CD4-positive, alpha-beta T cell (primary cell): ENCODE measurements at regions of chr9 and their contacts with region 1.

Region 1: GRCh38 chr9:133726401-133727276 is 11.5 kb downstream of the SARDH start:
- DNase-seq: peak; percentile 54 to 80 (median 68)
- ATAC-seq: peak; percentile 81
- H3K4me3 ChIP-seq: no peak overlapping the region
- H3K4me3 Mint-ChIP-seq: peak overlapping the region; percentile 43
- H3K27ac ChIP-seq: no peak overlapping the region
- H3K27ac Mint-ChIP-seq: peak overlapping the region; percentile 81
- H3K4me1 ChIP-seq: peaks cover 10% of the 10 kb centered on the region
- H3K4me1 Mint-ChIP-seq: peaks cover 20% of the 10 kb centered on the region
- H3K27me3 ChIP-seq: no peaks in the 10 kb centered on the region
- H3K27me3 Mint-ChIP-seq: no peaks in the 10 kb centered on the region
- CTCF ChIP-seq: peak; percentile 68

Region 2: DNA sequence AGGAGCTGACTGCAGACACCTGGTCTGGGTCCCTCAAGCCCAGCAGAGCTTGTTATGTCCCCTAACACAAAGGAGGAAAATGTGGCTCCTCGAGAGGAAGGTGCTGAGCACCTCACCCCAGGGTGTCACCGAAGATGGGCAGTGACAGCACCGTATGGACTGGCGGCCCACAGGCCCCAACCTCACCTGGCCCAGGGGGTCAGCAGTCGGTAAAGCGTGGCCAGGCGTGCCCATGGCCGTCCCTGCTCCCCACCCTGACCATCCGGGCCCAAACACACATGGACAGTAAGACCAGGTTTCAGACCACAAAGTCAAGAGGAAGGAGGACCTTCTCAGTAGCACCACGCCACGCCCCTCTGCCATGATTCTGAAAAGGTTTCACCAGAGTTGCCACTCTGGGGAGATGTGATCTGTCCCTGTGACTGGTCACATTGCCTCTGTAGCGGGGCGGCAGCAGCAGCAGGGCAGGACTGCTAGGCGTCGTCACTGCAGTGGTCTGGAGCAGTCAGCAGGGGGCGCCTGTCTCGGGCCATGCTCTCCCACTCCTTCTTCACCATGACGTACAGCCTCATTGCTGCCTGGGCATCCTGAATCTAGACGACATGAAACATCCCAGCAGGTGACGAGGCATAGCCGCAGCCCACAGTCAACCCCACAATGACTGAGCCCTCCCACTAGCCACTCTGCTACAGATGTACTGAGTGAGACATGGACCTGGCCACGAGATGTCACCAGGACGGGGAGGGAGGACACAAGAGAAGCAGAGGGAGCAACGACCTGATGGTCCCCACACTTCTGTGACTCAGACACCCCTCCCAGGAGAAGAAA is 319.9 kb before region 1 on chr9:
- CTCF ChIA-PET with region 1: no interaction called
- POLR2A ChIA-PET with region 1: no interaction called
- intact Hi-C with region 1: loop called in 1 of 2 experiments (anchors 10 kb)
- DNase-seq: peak; percentile 68 to 89 (median 74)
- ATAC-seq: peak; percentile 93
- H3K4me3 ChIP-seq: no peak overlapping the region
- H3K4me3 Mint-ChIP-seq: no peak overlapping the region
- H3K27ac ChIP-seq: no peak overlapping the region
- H3K27ac Mint-ChIP-seq: peak overlapping the region; percentile 73
- H3K4me1 ChIP-seq: peaks cover 9% of the 10 kb centered on the region
- H3K4me1 Mint-ChIP-seq: peaks cover 6% of the 10 kb centered on the region
- H3K27me3 ChIP-seq: no peaks in the 10 kb centered on the region
- H3K27me3 Mint-ChIP-seq: no peaks in the 10 kb centered on the region
- CTCF ChIP-seq: peak; percentile 91

Region 3: GRCh38 chr9:133532937-133533668 is 193.5 kb before region 1 on chr9:
- CTCF ChIA-PET with region 1: no interaction called
- POLR2A ChIA-PET with region 1: no interaction called
- intact Hi-C with region 1: loop called in 1 of 2 experiments (anchors 5 kb)
- DNase-seq: peak; percentile 47 to 83 (median 64)
- ATAC-seq: peak; percentile 82
- H3K4me3 ChIP-seq: no peak overlapping the region
- H3K4me3 Mint-ChIP-seq: peak overlapping the region; percentile 87
- H3K27ac ChIP-seq: no peak overlapping the region
- H3K27ac Mint-ChIP-seq: peak overlapping the region; percentile 85
- H3K4me1 ChIP-seq: peaks cover 26% of the 10 kb centered on the region
- H3K4me1 Mint-ChIP-seq: peaks cover 12% of the 10 kb centered on the region
- H3K27me3 ChIP-seq: peaks cover 0 to 10% of the 10 kb centered on the region in 2 experiments
- H3K27me3 Mint-ChIP-seq: peaks cover 6% of the 10 kb centered on the region
- CTCF ChIP-seq: peak; percentile 32

Region 4: GRCh38 chr9:133589454-133590227 is 137.0 kb before region 1 on chr9:
- CTCF ChIA-PET with region 1: no interaction called
- POLR2A ChIA-PET with region 1: no interaction called
- intact Hi-C with region 1: loop called in 1 of 2 experiments (anchors 1 kb)
- DNase-seq: peak; percentile 24 to 67 (median 38)
- ATAC-seq: peak; percentile 24
- H3K4me3 ChIP-seq: no peak overlapping the region
- H3K4me3 Mint-ChIP-seq: no peak overlapping the region
- H3K27ac ChIP-seq: no peak overlapping the region
- H3K27ac Mint-ChIP-seq: no peak overlapping the region
- H3K4me1 ChIP-seq: peaks cover 14% of the 10 kb centered on the region
- H3K4me1 Mint-ChIP-seq: no peaks in the 10 kb centered on the region
- H3K27me3 ChIP-seq: peaks cover 15 to 21% of the 10 kb centered on the region in 2 experiments
- H3K27me3 Mint-ChIP-seq: peaks cover 16% of the 10 kb centered on the region
- CTCF ChIP-seq: peak; percentile 64

Region 5: DNA sequence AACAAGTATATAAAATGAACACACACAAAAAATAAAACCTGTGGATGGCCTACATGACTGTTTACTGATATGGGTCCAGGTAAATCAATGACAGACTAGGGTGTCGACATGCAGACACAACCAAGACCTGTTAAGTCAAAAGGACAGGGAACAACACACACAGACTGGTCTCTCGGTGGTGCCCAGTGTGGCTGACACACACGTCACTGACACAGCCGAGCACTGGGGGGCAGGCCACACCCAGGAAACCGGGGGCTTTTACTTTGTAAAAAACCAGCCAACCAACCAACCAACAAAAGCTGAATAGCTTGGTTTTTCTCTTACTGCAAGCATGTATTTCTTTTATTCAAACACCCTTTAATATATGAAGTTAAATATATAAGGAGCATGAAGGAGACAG is 122.4 kb before region 1 on chr9:
- CTCF ChIA-PET with region 1: no interaction called
- POLR2A ChIA-PET with region 1: no interaction called
- intact Hi-C with region 1: loop called in 1 of 2 experiments (anchors 5 kb)
- DNase-seq: peak in 11 of 14 experiments; percentile 13 to 58 (median 42)
- ATAC-seq: peak; percentile 46
- H3K4me3 ChIP-seq: no peak overlapping the region
- H3K4me3 Mint-ChIP-seq: no peak overlapping the region
- H3K27ac ChIP-seq: no peak overlapping the region
- H3K27ac Mint-ChIP-seq: no peak overlapping the region
- H3K4me1 ChIP-seq: peaks cover 8% of the 10 kb centered on the region
- H3K4me1 Mint-ChIP-seq: peaks cover 4% of the 10 kb centered on the region
- H3K27me3 ChIP-seq: peaks cover 14 to 24% of the 10 kb centered on the region in 2 experiments
- H3K27me3 Mint-ChIP-seq: peaks cover 19% of the 10 kb centered on the region
- CTCF ChIP-seq: no peak

Region 6: GRCh38 chr9:133658442-133659431 is 67.9 kb before region 1 on chr9:
- CTCF ChIA-PET with region 1: interaction called, 4 read pairs
- POLR2A ChIA-PET with region 1: interaction called, 6 read pairs
- intact Hi-C with region 1: loop called (anchors 2 kb)
- DNase-seq: peak in 4 of 14 experiments; percentile 7 to 38 (median 26)
- ATAC-seq: no peak
- H3K4me3 ChIP-seq: no peak overlapping the region
- H3K4me3 Mint-ChIP-seq: peak overlapping the region; percentile 69
- H3K27ac ChIP-seq: no peak overlapping the region
- H3K27ac Mint-ChIP-seq: peak overlapping the region; percentile 93
- H3K4me1 ChIP-seq: peaks cover 50% of the 10 kb centered on the region
- H3K4me1 Mint-ChIP-seq: peaks cover 47% of the 10 kb centered on the region
- H3K27me3 ChIP-seq: peaks cover 5 to 18% of the 10 kb centered on the region in 2 experiments
- H3K27me3 Mint-ChIP-seq: peaks cover 33% of the 10 kb centered on the region
- CTCF ChIP-seq: no peak

Region 7: DNA sequence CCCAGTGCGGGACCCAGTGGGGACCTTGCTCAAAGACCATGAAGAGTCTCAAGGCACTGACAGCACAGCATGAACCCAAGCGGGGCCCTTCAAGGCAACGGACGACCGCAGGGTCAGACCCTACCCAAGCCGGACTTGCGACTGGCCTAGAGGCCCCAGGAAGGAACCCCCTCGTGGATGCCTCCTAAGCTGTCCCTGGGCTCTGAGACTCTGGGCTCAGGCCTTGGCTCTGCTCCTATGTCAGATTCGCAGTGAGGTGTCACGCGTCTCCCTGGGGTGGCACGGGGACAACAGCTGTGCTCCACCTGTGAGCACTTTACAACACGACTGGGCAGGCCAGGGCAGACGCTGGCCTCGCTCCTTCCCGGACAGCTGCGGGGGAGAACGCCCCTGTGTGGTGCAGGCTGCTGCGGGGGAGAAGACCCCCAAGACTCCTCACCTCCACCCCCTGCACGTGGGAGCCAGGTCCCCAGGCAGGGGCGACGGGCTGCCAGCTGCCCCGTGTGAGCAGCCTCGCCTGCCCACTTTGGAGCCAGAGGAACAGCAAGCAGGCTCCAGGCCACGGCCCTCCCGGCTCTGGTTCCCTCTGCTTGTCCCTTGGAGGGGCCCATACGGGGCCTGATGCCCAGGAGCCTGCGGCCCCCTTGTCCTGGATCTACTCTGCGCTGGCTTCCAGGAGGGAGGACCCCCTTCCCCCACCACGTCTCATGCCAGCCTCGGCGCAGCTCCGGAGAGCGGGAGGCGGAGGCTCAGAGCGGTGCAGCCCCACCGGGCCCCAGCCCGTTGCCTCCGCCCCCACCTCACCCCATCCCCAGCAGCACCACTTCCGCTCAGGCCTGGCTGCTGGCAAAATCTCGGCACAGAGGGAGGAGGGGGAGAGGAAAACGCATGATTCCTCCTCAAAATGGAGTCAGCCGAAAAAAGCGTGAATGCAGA is 24.5 kb before region 1 on chr9:
- CTCF ChIA-PET with region 1: no interaction called
- POLR2A ChIA-PET with region 1: interaction called, 13 read pairs
- intact Hi-C with region 1: no loop called
- DNase-seq: peak; percentile 60 to 89 (median 78)
- ATAC-seq: peak; percentile 82
- H3K4me3 ChIP-seq: peak overlapping the region; percentile 67
- H3K4me3 Mint-ChIP-seq: peak overlapping the region; percentile 90
- H3K27ac ChIP-seq: peak overlapping the region; percentile 66 to 94
- H3K27ac Mint-ChIP-seq: peak overlapping the region; percentile 98
- H3K4me1 ChIP-seq: peaks cover 67% of the 10 kb centered on the region
- H3K4me1 Mint-ChIP-seq: peaks cover 85% of the 10 kb centered on the region
- H3K27me3 ChIP-seq: no peaks in the 10 kb centered on the region
- H3K27me3 Mint-ChIP-seq: no peaks in the 10 kb centered on the region
- CTCF ChIP-seq: no peak

Region 8: GRCh38 chr9:133792721-133793470 is 66.3 kb after region 1 on chr9:
- CTCF ChIA-PET with region 1: no interaction called
- POLR2A ChIA-PET with region 1: no interaction called
- intact Hi-C with region 1: no loop called
- DNase-seq: peak; percentile 13 to 75 (median 37)
- ATAC-seq: peak; percentile 57
- H3K4me3 ChIP-seq: no peak overlapping the region
- H3K4me3 Mint-ChIP-seq: no peak overlapping the region
- H3K27ac ChIP-seq: no peak overlapping the region
- H3K27ac Mint-ChIP-seq: no peak overlapping the region
- H3K4me1 ChIP-seq: peaks cover 10% of the 10 kb centered on the region
- H3K4me1 Mint-ChIP-seq: no peaks in the 10 kb centered on the region
- H3K27me3 ChIP-seq: no peaks in the 10 kb centered on the region
- H3K27me3 Mint-ChIP-seq: no peaks in the 10 kb centered on the region
- CTCF ChIP-seq: peak; percentile 77

Region 9: DNA sequence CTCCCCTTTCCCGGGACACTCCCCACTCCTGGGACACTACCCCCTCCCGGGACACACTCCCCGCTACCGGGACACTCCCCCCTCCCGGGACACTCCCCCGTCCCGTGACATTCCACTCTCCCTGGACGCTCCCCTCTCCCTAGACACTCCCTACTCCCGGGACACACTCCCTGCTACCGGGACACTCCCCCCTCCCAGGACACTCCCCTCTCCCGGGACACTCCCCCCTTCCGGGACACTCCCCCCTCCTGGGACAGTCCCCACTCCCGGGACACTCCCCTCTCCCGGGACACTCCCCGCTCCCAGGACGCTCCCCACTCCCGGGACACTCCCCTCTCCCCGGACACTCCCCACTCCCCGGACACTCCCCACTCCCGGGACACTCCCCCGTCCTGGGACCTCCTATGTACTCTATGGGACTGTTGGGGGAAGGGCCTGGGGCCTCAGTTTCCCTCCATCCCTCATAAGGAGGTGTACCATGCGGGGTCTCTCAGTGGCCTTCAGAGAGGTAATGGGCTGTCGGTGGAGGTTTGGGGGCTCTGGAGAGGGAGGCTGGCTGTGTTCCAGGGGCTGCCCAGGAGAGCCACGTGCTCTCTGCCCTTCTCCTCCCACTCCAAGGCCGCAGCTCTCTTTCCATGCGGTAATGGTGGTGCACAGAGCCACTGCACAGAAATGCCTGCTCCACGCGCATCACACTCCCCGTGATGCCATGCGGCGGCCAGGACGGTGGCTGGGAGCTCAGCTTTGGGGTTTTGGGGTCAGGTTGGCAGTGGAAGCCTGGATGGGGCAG is 695.9 kb after region 1 on chr9:
- CTCF ChIA-PET with region 1: no interaction called
- POLR2A ChIA-PET with region 1: no interaction called
- intact Hi-C with region 1: no loop called
- DNase-seq: no peak
- ATAC-seq: no peak
- H3K4me3 ChIP-seq: no peak overlapping the region
- H3K4me3 Mint-ChIP-seq: no peak overlapping the region
- H3K27ac ChIP-seq: no peak overlapping the region
- H3K27ac Mint-ChIP-seq: no peak overlapping the region
- H3K4me1 ChIP-seq: no peaks in the 10 kb centered on the region
- H3K4me1 Mint-ChIP-seq: no peaks in the 10 kb centered on the region
- H3K27me3 ChIP-seq: no peaks in the 10 kb centered on the region
- H3K27me3 Mint-ChIP-seq: no peaks in the 10 kb centered on the region
- CTCF ChIP-seq: no peak

Region 10: GRCh38 chr9:134955801-134956200 is 1229.2 kb after region 1 on chr9:
- CTCF ChIA-PET with region 1: no interaction called
- POLR2A ChIA-PET with region 1: no interaction called
- intact Hi-C with region 1: no loop called
- DNase-seq: peak in 1 of 14 experiments; percentile 8
- ATAC-seq: no peak
- H3K4me3 ChIP-seq: no peak overlapping the region
- H3K4me3 Mint-ChIP-seq: no peak overlapping the region
- H3K27ac ChIP-seq: no peak overlapping the region
- H3K27ac Mint-ChIP-seq: no peak overlapping the region
- H3K4me1 ChIP-seq: no peaks in the 10 kb centered on the region
- H3K4me1 Mint-ChIP-seq: no peaks in the 10 kb centered on the region
- H3K27me3 ChIP-seq: peaks cover 0 to 3% of the 10 kb centered on the region in 2 experiments
- H3K27me3 Mint-ChIP-seq: peaks cover 4% of the 10 kb centered on the region
- CTCF ChIP-seq: no peak